Endothelial cell of umbilical vein (primary cell): ENCODE measurements at regions of chr7 and their contacts with region 1.

Region 1: GRCh38 chr7:103735377-103735776 is 254.1 kb downstream of the RELN start:
- DNase-seq: peak; percentile 88
- H3K4me3 ChIP-seq: no peak overlapping the region
- H3K27ac ChIP-seq: peak overlapping the region; percentile 21
- H3K4me1 ChIP-seq: peaks cover 19% of the 10 kb centered on the region
- H3K27me3 ChIP-seq: no peaks in the 10 kb centered on the region
- CTCF ChIP-seq: no peak
- POLR2A ChIP-seq: no peak

Region 2: DNA sequence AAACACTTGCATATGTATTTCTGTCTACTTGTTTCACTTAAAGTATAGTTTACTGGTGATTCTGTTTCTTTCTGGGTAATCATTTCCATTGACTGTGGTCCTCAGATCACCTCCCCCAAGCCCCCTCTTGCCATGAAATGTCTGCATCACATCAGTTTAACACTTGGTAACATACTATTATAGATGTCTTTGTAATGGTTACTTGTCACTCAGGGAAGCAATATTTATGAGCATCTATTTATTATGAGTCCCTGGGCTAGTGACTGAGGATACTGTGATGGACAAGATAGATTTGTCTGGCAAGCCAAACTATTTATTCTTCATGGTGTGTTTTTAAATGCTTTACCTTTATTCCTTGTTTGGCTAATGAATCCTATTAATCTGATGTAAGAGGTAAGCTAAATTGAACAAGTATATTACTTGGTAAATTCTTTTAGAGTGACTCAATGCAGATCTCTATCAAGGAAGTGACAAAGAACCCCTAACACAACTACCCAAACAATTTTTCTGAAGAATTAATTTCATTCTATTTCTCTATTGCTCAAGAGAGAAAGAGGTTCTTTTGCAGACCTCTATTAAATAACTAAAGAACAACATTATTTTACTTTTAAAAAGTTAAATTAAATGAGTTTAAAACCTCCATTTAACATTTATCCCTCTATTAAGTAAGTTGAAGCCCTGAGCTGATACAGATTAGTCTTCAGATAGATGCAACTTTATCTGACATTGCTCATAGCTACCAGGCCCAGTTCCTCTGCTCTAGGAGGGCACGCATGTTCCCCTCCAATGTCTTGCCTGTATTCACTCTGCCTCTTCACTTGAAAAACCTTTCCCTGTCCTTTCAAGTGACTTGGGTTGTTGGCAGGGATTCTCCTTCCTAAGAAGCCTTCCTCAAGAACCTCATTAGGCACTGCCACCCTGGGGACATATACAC is 16.6 kb before region 1 on chr7:
- CTCF ChIA-PET with region 1: interaction called, 11 read pairs
- POLR2A ChIA-PET with region 1: interaction called, 5 read pairs
- dilution Hi-C with region 1: no loop called
- intact Hi-C with region 1: loop called (anchors 1 kb)
- DNase-seq: peak; percentile 77
- H3K4me3 ChIP-seq: no peak overlapping the region
- H3K27ac ChIP-seq: peak overlapping the region; percentile 85
- H3K4me1 ChIP-seq: peaks cover 24% of the 10 kb centered on the region
- H3K27me3 ChIP-seq: no peaks in the 10 kb centered on the region
- CTCF ChIP-seq: no peak
- POLR2A ChIP-seq: no peak

Region 3: DNA sequence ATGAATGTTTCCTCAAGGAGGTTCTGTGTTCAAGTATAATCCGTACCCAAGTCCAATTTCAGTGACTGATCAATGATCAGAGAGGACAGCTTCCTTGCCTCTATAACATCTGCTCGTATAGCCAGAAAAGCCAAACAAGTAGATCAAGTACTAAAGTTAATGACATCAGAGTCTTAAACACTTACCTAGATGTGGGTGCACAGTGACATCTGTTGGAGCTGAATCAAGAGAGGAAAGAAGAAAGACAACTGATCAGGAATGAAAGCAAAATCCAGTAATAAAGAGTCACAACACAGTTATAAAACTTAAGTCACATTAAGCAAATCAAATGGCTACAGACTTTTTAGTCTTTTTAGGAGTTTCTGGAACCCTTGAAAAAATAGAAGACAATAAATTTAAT is 17.6 kb after region 1 on chr7:
- CTCF ChIA-PET with region 1: interaction called, 13 read pairs
- POLR2A ChIA-PET with region 1: no interaction called
- dilution Hi-C with region 1: no loop called
- intact Hi-C with region 1: no loop called
- DNase-seq: peak; percentile 21
- H3K4me3 ChIP-seq: no peak overlapping the region
- H3K27ac ChIP-seq: no peak overlapping the region
- H3K4me1 ChIP-seq: no peaks in the 10 kb centered on the region
- H3K27me3 ChIP-seq: no peaks in the 10 kb centered on the region
- CTCF ChIP-seq: no peak
- POLR2A ChIP-seq: no peak